ENCODE measurements at regions of chr1 and their contacts with region 1.

Region 1: GRCh38 chr1:27556781-27557595 is 47.0 kb downstream of the AHDC1 start:
- DNase-seq: peak; percentile 87 to 88
- H3K4me3 ChIP-seq: peak overlapping the region in 2 of 4 experiments; percentile 1 to 42; a peak in 2 of 8 replicates
- H3K27ac ChIP-seq: no peak overlapping the region
- H3K4me1 ChIP-seq: peaks cover 13 to 42% (median 19%) of the 10 kb centered on the region in 4 experiments
- H3K27me3 ChIP-seq: no peaks in the 10 kb centered on the region; a peak in 1 of 7 replicates
- CTCF ChIP-seq: peak in 2 of 3 experiments; percentile 69 to 75; a peak in 3 of 4 replicates
- EP300 ChIP-seq: no peak
- POLR2A ChIP-seq: no peak
- RAD21 ChIP-seq: peak; percentile 73 to 79

Region 2: DNA sequence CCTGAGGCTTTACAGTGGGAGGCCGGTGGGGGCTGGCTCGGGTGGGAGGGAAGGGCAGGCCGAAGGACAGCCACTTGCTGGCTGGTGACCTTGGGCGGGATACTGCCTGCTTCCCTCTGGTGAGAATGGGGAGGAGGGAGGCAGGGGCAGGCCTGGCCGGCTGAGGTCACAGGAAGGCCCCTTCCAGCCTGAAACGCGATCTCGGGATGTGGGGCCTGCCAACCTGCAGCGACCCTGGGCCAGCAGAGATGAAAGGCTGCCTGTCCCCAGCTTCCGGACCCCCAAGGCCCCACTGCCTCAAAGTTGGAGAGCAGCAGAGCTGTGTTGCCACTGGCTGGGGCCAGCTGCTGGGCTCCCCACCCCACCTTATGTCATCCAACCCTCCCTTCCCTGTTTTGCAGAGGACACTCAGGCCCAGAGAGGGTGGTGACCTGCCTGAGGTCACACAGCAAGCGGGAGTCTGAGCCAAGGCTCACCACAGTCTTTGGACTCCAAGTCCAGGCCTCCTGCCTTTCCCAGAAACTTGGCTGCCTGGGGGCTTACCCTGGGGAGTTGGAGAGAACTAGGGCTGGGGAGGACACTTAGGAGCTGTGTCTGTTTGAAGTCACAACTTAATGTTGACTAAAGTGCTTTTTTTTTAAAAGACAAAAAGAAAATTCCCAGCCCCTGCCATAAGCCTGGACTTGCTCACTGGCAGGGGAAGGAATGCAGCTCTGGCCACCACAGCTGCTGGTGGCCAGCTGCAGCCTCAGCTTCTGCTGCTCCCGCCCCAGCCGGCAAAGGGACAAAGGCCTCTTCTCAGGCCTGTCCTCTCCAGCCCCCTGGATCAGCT is 52.2 kb before region 1 on chr1:
- CTCF ChIA-PET with region 1: interaction called, 48 read pairs
- POLR2A ChIA-PET with region 1: interaction called, 3 read pairs
- DNase-seq: peak in 1 of 2 experiments; percentile 67
- H3K4me3 ChIP-seq: no peak overlapping the region
- H3K27ac ChIP-seq: no peak overlapping the region
- H3K4me1 ChIP-seq: peaks cover 0 to 14% (median 6%) of the 10 kb centered on the region in 4 experiments; a peak in 5 of 7 replicates
- H3K27me3 ChIP-seq: no peaks in the 10 kb centered on the region
- CTCF ChIP-seq: no peak
- EP300 ChIP-seq: no peak
- POLR2A ChIP-seq: no peak
- RAD21 ChIP-seq: no peak

Region 3: DNA sequence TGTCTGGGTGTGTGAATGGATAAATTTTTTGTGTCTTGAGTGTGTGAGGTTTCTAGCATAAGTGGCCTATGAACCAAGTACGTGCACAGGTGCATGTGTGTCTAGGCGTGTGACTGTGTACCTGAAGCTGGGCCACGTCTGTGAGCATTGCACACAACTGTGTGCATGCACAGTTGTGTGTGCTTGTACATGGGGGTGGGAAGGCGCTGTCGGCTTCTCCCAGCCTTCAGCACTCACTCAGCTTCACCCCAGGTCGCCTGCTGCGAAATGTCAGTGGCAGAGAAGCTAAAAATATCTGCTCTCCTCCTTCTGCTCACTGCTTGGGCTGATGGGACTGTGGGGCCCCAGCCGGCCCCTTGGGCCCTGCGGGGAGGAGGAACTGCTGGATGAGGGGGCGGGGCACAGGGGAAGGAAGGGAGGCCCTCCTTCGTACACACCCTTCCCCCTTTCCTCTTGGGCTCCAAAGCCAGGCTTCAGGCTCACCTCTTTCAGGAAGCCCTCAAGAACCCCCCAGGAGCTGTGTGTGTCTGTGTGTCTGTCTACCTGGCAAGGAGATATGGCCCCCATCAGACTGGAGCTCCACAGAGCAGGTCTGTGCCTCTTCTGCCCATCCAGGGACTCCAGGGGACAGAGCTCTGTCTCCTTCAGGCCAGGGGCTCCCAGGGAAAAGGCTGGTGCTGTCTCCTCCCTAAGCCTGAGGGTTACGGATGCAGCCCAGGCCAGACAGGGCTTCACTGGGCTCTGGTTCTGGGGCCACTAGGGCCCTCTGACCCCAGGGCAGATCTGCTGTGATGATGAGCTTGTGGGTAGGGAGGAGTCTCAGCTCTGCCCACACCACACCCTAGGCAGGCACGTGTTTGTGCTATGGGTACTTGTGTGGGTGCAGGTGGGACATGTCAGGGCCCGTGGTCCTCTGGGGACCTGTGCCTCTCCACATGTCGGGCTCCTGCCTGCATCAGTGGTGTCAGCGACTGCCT is 31.4 kb before region 1 on chr1:
- CTCF ChIA-PET with region 1: interaction called, 103 read pairs
- POLR2A ChIA-PET with region 1: interaction called, 14 read pairs
- DNase-seq: peak in 1 of 2 experiments; percentile 81
- H3K4me3 ChIP-seq: peak overlapping the region in 3 of 4 experiments; percentile 15 to 42 (median 34); a peak in 4 of 8 replicates
- H3K27ac ChIP-seq: 0 out of 2 replicates have a peak overlapping the region, but pooled peaks have one; percentile 43
- H3K4me1 ChIP-seq: peaks cover 12 to 56% (median 42%) of the 10 kb centered on the region in 4 experiments
- H3K27me3 ChIP-seq: no peaks in the 10 kb centered on the region
- CTCF ChIP-seq: no peak
- EP300 ChIP-seq: no peak
- POLR2A ChIP-seq: no peak
- RAD21 ChIP-seq: no peak; a peak in 1 of 4 replicates

Region 4: GRCh38 chr1:27568300-27569087 is 11.5 kb after region 1 on chr1:
- CTCF ChIA-PET with region 1: interaction called, 862 read pairs
- POLR2A ChIA-PET with region 1: interaction called, 350 read pairs
- DNase-seq: peak; percentile 80 to 97
- H3K4me3 ChIP-seq: peak overlapping the region in 3 of 4 experiments; percentile 1 to 43 (median 29); a peak in 6 of 8 replicates
- H3K27ac ChIP-seq: peak overlapping the region; percentile 1; the same call in 1 of the 2 replicates
- H3K4me1 ChIP-seq: peaks cover 37 to 77% (median 67%) of the 10 kb centered on the region in 4 experiments
- H3K27me3 ChIP-seq: no peaks in the 10 kb centered on the region
- CTCF ChIP-seq: peak in 2 of 3 experiments; percentile 73 to 91; a peak in 3 of 4 replicates
- EP300 ChIP-seq: no peak
- POLR2A ChIP-seq: no peak
- RAD21 ChIP-seq: peak; percentile 32 to 69

Region 5: GRCh38 chr1:27589841-27590426 is 32.9 kb after region 1 on chr1:
- CTCF ChIA-PET with region 1: interaction called, 1,807 read pairs
- POLR2A ChIA-PET with region 1: interaction called, 350 read pairs
- DNase-seq: no peak
- H3K4me3 ChIP-seq: no peak overlapping the region
- H3K27ac ChIP-seq: no peak overlapping the region
- H3K4me1 ChIP-seq: peaks cover 7 to 45% (median 33%) of the 10 kb centered on the region in 4 experiments
- H3K27me3 ChIP-seq: peaks cover 0 to 2% (median 0%) of the 10 kb centered on the region in 4 experiments; a peak in 1 of 7 replicates
- CTCF ChIP-seq: no peak
- EP300 ChIP-seq: no peak
- POLR2A ChIP-seq: no peak
- RAD21 ChIP-seq: no peak